IMR-90 (cell line): ENCODE measurements at regions of chr6 and their contacts with region 1.

Region 1: GRCh38 chr6:2695454-2696095 is 55.1 kb downstream of the MYLK4 start:
- DNase-seq: peak; percentile 57
- ATAC-seq: peak; percentile 77
- H3K4me3 ChIP-seq: no peak overlapping the region
- H3K27ac ChIP-seq: no peak overlapping the region
- H3K4me1 ChIP-seq: no peaks in the 10 kb centered on the region
- H3K27me3 ChIP-seq: peaks cover 15% of the 10 kb centered on the region
- CTCF ChIP-seq: peak; percentile 63
- POLR2A ChIP-seq: no peak
- RAD21 ChIP-seq: peak; percentile 72

Region 2: GRCh38 chr6:2116496-2116895 is 579.1 kb before region 1 on chr6:
- CTCF ChIA-PET with region 1: no interaction called
- POLR2A ChIA-PET with region 1: no interaction called
- dilution Hi-C with region 1: no loop called
- in situ Hi-C with region 1: no loop called
- intact Hi-C with region 1: loop called (anchors 5 kb)
- DNase-seq: peak; percentile 42
- ATAC-seq: no peak
- H3K4me3 ChIP-seq: no peak overlapping the region
- H3K27ac ChIP-seq: no peak overlapping the region
- H3K4me1 ChIP-seq: peaks cover 2% of the 10 kb centered on the region; the same call in 1 of the 2 replicates
- H3K27me3 ChIP-seq: no peaks in the 10 kb centered on the region
- CTCF ChIP-seq: no peak
- POLR2A ChIP-seq: no peak
- RAD21 ChIP-seq: no peak